Endothelial cell of umbilical vein (primary cell): ENCODE measurements at regions of chr1 and their contacts with region 1.

Region 1: DNA sequence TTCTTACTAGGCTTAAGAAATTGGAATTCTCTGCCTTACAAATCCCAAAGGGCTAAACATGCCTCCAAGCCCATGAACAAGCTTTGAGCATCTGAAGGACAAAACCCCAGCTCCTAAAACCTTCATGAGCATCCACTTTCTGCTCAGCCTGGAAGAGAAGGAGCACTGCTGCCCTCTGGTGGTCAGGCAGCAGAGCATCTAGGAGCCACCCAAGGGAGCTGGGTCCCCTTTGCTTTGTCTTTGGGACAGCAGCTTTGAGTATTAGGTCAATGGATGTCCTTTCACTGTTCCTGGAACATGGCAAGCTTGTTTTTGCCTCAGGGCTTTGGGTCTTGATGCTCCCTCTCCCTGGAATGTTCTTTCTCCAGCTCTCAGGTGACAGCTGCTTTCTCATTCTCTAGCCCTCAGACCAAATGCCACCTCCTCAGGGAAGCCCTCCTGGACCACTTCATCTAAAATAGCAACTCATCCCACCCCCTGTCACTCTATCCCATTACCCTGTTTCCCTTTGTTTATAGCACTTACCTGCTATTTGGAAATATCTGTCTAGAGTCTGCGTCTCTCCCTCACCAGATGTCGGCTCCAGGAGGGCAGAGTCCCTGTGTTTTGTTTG is 25.7 kb downstream of the RAB7B start:
- DNase-seq: peak; percentile 68
- H3K4me3 ChIP-seq: no peak overlapping the region
- H3K27ac ChIP-seq: no peak overlapping the region
- H3K4me1 ChIP-seq: peaks cover 5% of the 10 kb centered on the region
- H3K27me3 ChIP-seq: no peaks in the 10 kb centered on the region
- CTCF ChIP-seq: peak; percentile 91 to 98
- POLR2A ChIP-seq: no peak

Region 2: DNA sequence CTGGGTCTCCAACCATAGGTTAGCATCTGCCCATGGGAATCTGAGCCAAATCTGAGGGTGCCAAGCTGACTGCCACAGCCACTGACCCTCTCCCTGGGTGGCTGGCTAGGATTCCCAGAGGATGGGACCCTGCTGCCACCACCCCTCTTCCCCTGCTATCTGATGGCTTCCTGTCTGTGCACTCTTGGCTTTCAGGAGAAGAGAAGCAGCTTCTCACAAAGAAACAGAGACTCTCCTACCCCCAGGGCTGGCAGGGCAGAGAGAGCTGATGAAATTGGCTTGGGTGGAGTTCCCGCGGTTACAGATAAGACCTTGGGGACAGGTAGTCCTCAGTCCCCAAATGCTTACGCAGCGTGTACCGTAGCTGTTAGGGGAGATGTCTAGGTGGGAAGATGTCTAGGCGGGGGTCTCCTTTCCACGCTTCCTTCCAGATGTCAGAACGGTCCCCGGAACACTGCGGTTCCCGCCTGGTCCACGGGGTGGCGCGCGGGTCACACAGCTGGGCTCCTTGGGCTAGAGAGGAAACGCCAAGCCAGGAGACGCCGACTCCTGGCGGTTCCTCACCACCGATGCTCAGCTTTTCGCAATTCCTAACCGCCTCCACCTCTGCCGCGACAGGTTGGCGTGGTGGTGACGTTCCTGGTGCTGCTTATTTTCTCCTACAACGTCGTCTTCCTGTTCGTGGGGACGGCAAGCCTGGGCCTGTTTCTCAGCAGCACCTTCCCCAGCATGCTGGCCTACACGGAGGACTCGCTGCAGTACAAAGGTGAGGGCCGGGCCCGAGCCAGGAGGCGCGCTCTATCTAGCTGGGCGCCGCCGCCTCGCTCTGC is 385.8 kb before region 1 on chr1:
- CTCF ChIA-PET with region 1: interaction called, 10 read pairs
- POLR2A ChIA-PET with region 1: no interaction called
- dilution Hi-C with region 1: no loop called
- intact Hi-C with region 1: no loop called
- DNase-seq: peak; percentile 83
- H3K4me3 ChIP-seq: peak overlapping the region in 1 of 3 experiments; percentile 11
- H3K27ac ChIP-seq: no peak overlapping the region
- H3K4me1 ChIP-seq: peaks cover 8% of the 10 kb centered on the region
- H3K27me3 ChIP-seq: no peaks in the 10 kb centered on the region
- CTCF ChIP-seq: peak; percentile 95 to 97
- POLR2A ChIP-seq: no peak

Region 3: GRCh38 chr1:205791568-205792180 is 185.8 kb before region 1 on chr1:
- CTCF ChIA-PET with region 1: interaction called, 403 read pairs
- POLR2A ChIA-PET with region 1: no interaction called
- dilution Hi-C with region 1: no loop called
- intact Hi-C with region 1: loop called (anchors 1 kb)
- DNase-seq: peak; percentile 53
- H3K4me3 ChIP-seq: no peak overlapping the region
- H3K27ac ChIP-seq: no peak overlapping the region
- H3K4me1 ChIP-seq: no peaks in the 10 kb centered on the region
- H3K27me3 ChIP-seq: no peaks in the 10 kb centered on the region
- CTCF ChIP-seq: peak; percentile 71 to 86
- POLR2A ChIP-seq: no peak

Region 4: DNA sequence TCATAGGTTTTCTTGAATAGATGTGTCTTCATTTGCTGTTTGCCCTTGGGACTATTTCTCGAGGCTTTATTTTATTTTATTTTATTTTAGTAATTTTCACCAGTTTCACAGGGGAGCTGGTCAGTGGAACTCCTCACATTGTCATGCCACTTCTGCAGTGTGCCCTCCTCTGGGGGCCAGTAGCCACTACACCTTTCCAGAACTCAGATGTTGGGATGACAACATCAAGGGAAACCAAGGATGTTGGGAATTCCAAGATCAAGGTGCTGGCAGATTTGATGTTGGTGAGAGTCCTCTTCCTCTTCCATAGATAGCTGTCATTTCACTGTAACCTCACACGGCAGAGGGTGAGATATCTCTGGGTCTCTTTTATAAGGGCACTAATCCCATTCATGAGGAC is 69.7 kb before region 1 on chr1:
- CTCF ChIA-PET with region 1: interaction called, 1,606 read pairs
- POLR2A ChIA-PET with region 1: no interaction called
- dilution Hi-C with region 1: no loop called
- intact Hi-C with region 1: no loop called
- DNase-seq: peak; percentile 46
- H3K4me3 ChIP-seq: no peak overlapping the region
- H3K27ac ChIP-seq: no peak overlapping the region
- H3K4me1 ChIP-seq: no peaks in the 10 kb centered on the region
- H3K27me3 ChIP-seq: peaks cover 5 to 9% of the 10 kb centered on the region in 2 experiments
- CTCF ChIP-seq: peak; percentile 65 to 75
- POLR2A ChIP-seq: no peak

Region 5: GRCh38 chr1:205961405-205961804 is 16.1 kb before region 1 on chr1:
- CTCF ChIA-PET with region 1: interaction called, 154 read pairs
- POLR2A ChIA-PET with region 1: no interaction called
- dilution Hi-C with region 1: no loop called
- intact Hi-C with region 1: no loop called
- DNase-seq: peak; percentile 42
- H3K4me3 ChIP-seq: no peak overlapping the region
- H3K27ac ChIP-seq: no peak overlapping the region
- H3K4me1 ChIP-seq: peaks cover 19% of the 10 kb centered on the region
- H3K27me3 ChIP-seq: peaks cover 6 to 14% of the 10 kb centered on the region in 2 experiments
- CTCF ChIP-seq: no peak
- POLR2A ChIP-seq: no peak

Region 6: DNA sequence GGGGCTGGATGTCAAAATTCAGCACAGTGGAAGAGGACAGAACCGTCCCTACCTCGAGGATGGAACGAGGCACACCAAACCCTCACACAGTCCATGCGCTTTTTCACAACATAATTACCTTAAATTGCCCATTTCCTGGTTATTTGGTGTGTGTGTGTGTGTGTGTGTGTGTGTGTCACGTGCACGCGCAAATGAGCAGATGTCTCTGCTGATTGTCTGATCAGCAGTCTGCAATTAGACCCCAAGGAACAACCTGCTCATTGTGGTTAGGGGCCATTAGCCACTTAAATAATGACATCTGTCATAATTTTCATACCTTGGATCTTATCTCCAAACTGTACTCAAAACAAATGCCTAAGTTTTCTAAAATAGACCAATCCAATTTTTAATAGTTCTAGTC is 116.5 kb after region 1 on chr1:
- CTCF ChIA-PET with region 1: interaction called, 13 read pairs
- POLR2A ChIA-PET with region 1: no interaction called
- dilution Hi-C with region 1: no loop called
- intact Hi-C with region 1: no loop called
- DNase-seq: no peak
- H3K4me3 ChIP-seq: no peak overlapping the region
- H3K27ac ChIP-seq: no peak overlapping the region
- H3K4me1 ChIP-seq: no peaks in the 10 kb centered on the region
- H3K27me3 ChIP-seq: peaks cover 0 to 10% of the 10 kb centered on the region in 2 experiments
- CTCF ChIP-seq: no peak
- POLR2A ChIP-seq: no peak

Region 7: DNA sequence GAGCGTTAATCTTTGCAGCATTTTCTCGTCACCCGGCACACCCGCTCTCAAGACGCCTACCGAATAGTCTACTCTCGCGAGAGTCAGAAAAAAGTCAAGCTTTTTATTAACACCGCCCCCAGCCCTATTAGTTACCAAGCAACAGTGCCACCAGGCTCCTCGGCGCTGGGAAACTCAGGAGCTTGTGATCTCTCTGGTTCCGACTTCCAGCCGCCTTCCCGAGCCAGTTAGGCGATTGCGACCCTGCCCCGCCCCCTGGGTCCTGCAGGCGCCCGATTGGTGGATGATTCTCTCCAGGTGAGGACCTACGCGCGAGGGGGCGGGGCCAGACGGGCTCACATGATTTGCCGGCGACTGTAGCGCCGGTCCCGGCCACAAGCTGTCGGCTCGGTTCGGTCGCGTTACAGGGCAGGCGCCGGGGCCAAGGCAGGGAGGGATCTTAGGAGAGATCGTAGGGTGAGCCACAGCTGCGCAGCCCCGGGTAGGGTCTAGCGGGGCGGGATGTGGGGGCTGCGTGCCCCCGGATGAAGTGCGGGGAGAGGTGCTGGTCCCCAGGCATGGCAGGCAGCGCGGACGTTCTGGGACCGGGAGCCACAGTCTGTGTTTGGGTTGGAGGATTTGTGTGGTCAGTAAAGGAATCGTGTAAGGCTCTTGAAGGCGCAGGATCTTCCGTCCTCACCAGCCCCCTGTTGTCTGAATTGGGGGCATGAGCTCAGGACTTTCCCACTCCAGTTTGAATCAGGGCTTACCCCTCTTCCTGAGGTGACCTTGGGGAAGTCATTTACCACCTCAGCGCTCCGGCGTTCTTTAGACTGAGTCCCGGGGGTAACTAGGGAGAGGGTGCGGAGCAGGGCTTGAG is 1075.6 kb after region 1 on chr1 and contains the start of gene PFKFB2:
- CTCF ChIA-PET with region 1: no interaction called
- POLR2A ChIA-PET with region 1: no interaction called
- dilution Hi-C with region 1: no loop called
- intact Hi-C with region 1: no loop called
- DNase-seq: peak; percentile 88
- H3K4me3 ChIP-seq: peak within 1 kb of the TSS; percentile 27 to 77 (median 62)
- H3K27ac ChIP-seq: no peak within 1 kb of the TSS
- H3K4me1 ChIP-seq: peaks cover 15% of the 10 kb centered on the region
- H3K27me3 ChIP-seq: peaks cover 0 to 2% of the 10 kb centered on the region in 2 experiments
- CTCF ChIP-seq: no peak
- POLR2A ChIP-seq: no peak
- total RNA-seq, gene PFKFB2: 1.8 and 2.0 TPM in 2 replicates